Sigmoid colon (tissue), 7 donors: ENCODE measurements at regions of chr17 and their contacts with region 1.

Region 1: GRCh38 chr17:81222906-81223761 is at the start of gene CEP131:
- DNase-seq: peak; percentile 99
- H3K4me3 ChIP-seq: peak within 1 kb of the TSS; percentile 53 to 87 (median 80)
- H3K27ac ChIP-seq: peak within 1 kb of the TSS; percentile 50 to 70 (median 62)
- H3K4me1 ChIP-seq: peaks cover 0 to 25% (median 18%) of the 10 kb centered on the region in 4 donors
- H3K27me3 ChIP-seq: no peaks in the 10 kb centered on the region
- CTCF ChIP-seq: no peak
- EP300 ChIP-seq: no peak
- POLR2A ChIP-seq: no peak
- total RNA-seq, gene CEP131: 4.1 to 11.6 (median 5.1) TPM

Region 2: DNA sequence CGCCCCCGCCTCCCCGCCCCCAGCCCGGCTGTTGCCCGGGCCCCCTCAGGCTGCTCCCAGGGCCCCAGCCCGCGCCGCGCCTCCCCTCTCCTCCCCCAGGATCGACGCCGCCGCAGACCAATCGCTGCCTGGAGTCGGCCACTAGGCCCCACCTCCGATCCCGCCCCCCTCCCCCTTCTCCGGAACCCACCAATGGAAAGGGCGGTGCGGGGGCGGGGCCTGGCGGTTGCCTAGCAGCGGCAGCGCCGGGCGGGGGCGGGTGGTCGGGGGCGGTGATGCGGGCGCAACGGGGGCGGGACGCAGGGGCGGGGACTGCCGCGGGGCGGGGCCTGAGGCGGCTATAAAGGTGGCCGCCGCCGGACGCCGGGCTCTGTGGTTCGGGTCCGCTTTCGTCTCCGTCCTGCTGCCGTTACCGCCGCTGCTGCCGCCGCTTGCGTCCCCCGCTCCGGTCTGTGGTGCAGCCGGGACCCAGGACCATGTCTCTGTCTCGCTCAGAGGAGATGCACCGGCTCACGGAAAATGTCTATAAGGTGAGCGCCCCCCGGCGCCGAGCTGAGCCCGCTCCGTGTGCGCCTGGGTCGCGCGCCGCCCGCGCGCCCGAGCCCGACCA is 188.2 kb before region 1 on chr17 and contains the start of gene BAIAP2:
- intact Hi-C with region 1: loop called (anchors 10 kb)
- DNase-seq: peak; percentile 98
- H3K4me3 ChIP-seq: peak within 1 kb of the TSS; percentile 53 to 67 (median 62)
- H3K27ac ChIP-seq: peak within 1 kb of the TSS; percentile 76 to 92 (median 87)
- H3K4me1 ChIP-seq: peaks cover 0 to 55% (median 52%) of the 10 kb centered on the region in 4 donors
- H3K27me3 ChIP-seq: no peaks in the 10 kb centered on the region
- CTCF ChIP-seq: no peak
- EP300 ChIP-seq: no peak
- POLR2A ChIP-seq: peak; percentile 91 to 96
- total RNA-seq, gene BAIAP2: 32.6 to 52.3 (median 50.9) TPM